HAP-1 (cell line): ENCODE measurements at regions of chr15 and their contacts with region 1.

Region 1: DNA sequence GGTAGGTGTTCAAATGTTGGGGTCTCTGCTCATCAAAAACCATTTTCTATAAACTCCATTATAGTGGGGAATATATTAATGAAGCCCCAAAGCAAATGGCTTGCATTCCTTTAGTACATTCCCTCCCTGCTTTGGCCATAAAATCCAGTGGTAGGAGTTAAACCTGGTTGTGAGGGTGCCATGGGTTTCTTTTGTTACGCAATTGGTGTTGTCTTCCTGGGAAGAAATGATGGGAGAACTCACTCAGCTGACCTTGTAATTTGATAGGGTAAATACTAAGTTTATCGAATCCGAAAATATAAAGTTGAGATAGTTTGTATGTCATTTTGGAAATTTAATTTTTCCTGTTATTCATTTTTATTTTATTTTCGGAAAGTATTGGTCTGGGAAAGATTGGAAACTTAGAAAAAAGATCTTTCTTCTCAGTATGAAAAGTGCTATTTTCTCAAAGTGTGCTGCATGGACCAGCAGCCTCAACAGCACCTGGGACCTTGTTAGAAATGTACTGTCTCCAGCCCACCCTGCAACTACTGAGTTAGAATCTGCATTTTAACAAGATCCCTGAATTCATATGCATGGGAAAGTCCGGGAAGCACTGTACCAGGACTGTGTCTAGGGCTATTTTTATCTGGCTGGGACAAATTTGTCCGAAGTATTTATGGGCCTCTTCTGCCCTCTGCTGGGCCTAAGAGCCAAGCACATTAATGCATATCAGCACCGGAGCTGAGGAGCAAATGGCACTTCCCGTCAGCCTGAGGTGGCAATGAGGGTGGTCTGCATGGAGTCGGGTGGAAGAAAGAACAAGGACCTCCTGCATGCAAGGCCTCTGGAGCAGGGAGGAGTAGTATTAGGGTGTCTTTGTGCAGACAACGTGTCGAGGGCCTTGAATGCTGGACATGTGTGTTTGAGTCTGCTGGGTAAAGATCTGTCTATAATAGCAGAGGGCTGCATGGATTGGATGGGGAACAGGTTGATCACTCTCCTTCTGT is 54.7 kb downstream of the FAM81A start:
- DNase-seq: peak; percentile 76 to 87
- H3K4me3 ChIP-seq: no peak overlapping the region
- H3K4me1 ChIP-seq: peaks cover 13% of the 10 kb centered on the region
- H3K27me3 ChIP-seq: no peaks in the 10 kb centered on the region

Region 2: DNA sequence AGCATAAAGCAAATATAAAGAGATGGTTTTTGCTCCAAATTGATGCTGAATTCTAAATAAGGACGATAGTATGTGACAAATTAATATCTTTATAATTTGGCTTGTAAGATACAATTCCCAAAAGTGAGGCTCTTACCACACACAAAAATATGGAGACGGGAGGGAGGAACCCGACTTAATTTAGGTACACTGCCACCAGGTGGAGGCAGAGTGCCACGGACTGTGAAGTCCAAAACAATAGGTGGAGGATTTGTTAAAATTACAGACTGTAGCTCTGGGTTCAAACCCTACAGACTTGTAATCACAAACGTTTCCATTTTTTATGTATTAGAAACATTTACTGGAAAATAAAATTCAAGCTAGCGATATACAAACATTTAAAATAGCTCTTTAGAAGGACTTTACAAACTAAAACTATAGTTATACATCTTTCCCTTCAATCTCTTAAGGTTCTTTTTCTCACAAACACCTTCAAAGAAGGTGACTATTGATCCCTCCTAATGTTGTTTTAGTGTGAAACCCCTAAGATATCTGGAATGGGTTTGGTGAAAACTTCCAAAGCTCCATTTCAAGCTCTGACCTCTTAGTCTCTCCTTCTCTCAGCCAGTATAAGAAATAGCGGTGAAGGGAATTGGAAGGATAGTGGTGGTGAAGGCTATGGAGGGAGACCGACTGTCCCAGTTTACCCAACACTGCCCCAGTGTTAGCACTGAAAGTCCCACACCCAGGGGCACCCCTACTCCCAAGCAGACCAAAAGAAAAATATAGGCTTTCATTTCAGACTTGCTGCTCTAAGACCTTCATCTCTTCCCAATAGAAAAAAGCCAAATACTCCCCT is 1264.8 kb before region 1 on chr15:
- in situ Hi-C with region 1: loop called (anchors 25 kb)
- DNase-seq: peak; percentile 79 to 84
- H3K4me3 ChIP-seq: no peak overlapping the region
- H3K4me1 ChIP-seq: peaks cover 14% of the 10 kb centered on the region
- H3K27me3 ChIP-seq: no peaks in the 10 kb centered on the region

Region 3: DNA sequence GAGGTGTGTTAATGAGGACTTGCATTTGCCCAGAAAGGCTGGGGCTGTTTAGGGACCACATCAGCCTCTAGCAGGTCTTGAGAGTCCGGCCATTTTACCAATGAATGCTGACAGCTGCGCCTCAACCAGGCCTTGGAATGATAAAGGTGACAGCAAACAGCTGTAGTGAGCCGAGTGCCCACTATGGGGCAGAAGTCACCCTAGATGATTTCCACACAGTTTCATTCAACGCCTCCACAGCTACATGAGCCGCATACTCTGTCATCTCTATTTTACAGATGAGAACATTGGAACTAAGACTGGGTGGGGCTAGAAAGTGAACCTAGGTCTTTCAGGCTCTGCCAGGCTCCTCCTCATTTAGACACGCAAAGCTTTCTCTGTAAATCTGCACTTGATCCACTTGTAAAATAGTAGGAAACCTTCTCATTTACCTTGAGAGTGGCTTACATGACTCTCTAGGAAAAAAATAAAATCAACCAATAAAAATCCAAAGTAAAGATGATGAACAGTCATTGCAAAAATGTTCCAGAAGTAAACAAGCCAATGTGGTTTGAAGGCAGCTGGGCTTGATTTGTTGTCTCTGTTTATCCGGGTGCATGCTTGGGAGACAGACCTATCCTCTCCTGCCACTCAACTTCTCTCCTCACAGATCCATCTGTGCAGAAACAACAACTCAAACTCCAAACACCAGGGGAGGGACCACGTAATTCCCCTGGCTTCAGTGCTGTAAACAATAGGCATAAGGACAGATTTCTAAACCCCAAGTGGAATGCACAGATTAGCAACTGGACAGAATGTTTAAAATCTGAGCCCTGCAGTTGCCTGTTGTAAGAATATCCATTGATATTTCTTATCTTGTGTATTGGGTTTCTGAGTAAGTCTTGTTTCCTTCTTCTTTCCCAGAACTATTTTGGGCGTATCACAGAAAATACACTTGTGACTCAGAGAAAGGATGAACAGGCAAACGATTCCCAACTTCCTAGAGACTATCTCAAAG is 317.6 kb before region 1 on chr15:
- in situ Hi-C with region 1: loop called (anchors 5 kb)
- DNase-seq: peak; percentile 79 to 82
- H3K4me3 ChIP-seq: no peak overlapping the region
- H3K4me1 ChIP-seq: peaks cover 10% of the 10 kb centered on the region
- H3K27me3 ChIP-seq: no peaks in the 10 kb centered on the region